CD4-positive, alpha-beta T cell (primary cell): ENCODE measurements at regions of chr3 and their contacts with region 1.

Region 1: DNA sequence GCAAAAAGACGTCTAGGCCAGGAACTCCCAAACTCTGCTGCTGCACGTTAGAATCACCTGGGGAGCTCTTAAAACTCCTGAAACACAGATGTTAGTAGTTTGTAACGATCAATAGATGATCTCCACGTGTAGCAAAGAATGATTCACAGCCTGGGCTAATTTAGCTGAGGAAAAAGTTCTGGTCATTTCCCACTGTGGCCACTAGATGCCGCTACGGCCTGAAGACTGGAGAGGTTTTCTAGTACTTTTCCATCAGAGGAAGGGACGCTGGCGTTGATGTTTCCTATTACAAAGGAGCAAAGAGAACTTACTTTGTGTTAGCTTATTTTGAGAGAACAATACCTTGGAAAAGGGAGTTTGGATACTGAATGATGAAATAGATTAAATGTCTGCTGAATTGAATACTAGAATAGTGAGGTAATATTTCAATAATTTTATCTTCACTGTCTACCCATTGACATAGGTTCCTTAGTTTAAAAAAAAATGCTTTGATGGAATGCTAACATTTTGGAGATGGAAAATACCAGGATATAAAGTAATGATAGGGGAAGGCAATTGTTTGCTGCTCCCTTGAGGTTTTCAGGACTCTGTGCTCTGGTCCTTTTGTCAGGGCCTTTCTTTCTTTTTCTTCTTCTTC is 159.1 kb downstream of the P3H2 start:
- DNase-seq: peak; percentile 32 to 73 (median 53)
- ATAC-seq: peak; percentile 80
- H3K4me3 ChIP-seq: no peak overlapping the region
- H3K4me3 Mint-ChIP-seq: no peak overlapping the region
- H3K27ac ChIP-seq: no peak overlapping the region
- H3K27ac Mint-ChIP-seq: no peak overlapping the region
- H3K4me1 ChIP-seq: peaks cover 4% of the 10 kb centered on the region
- H3K4me1 Mint-ChIP-seq: peaks cover 7% of the 10 kb centered on the region
- H3K27me3 ChIP-seq: peaks cover 0 to 3% of the 10 kb centered on the region in 2 experiments
- H3K27me3 Mint-ChIP-seq: peaks cover 22% of the 10 kb centered on the region
- CTCF ChIP-seq: peak; percentile 95

Region 2: GRCh38 chr3:190197346-190197763 is 235.7 kb after region 1 on chr3:
- CTCF ChIA-PET with region 1: no interaction called
- POLR2A ChIA-PET with region 1: no interaction called
- intact Hi-C with region 1: loop called (anchors 5 to 10 kb)
- DNase-seq: no peak
- ATAC-seq: no peak
- H3K4me3 ChIP-seq: no peak overlapping the region
- H3K4me3 Mint-ChIP-seq: no peak overlapping the region
- H3K27ac ChIP-seq: no peak overlapping the region
- H3K27ac Mint-ChIP-seq: no peak overlapping the region
- H3K4me1 ChIP-seq: no peaks in the 10 kb centered on the region
- H3K4me1 Mint-ChIP-seq: no peaks in the 10 kb centered on the region
- H3K27me3 ChIP-seq: no peaks in the 10 kb centered on the region
- H3K27me3 Mint-ChIP-seq: peaks cover 28% of the 10 kb centered on the region
- CTCF ChIP-seq: no peak

Region 3: DNA sequence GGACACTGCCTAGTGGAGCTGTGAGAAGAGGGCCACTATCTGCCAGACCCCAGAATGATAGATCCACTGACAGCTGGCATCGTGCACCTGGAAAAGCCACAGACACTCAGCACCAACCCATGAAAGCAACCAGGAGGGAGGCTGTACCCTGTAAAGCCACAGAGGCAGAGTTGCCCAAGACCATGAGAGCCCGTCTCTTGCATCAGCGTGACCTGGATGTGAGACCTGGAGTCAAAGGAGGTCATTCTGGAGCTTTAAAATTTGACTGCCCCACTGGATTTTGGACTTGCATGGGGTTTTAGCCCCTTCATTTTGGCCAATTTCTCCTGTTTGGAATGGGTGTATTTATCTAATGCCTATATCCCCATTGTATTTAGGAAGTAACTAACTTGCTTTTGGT is 242.6 kb after region 1 on chr3:
- CTCF ChIA-PET with region 1: no interaction called
- POLR2A ChIA-PET with region 1: no interaction called
- intact Hi-C with region 1: loop called (anchors 5 to 10 kb)
- DNase-seq: no peak
- ATAC-seq: no peak
- H3K4me3 ChIP-seq: no peak overlapping the region
- H3K4me3 Mint-ChIP-seq: no peak overlapping the region
- H3K27ac ChIP-seq: no peak overlapping the region
- H3K27ac Mint-ChIP-seq: no peak overlapping the region
- H3K4me1 ChIP-seq: no peaks in the 10 kb centered on the region
- H3K4me1 Mint-ChIP-seq: no peaks in the 10 kb centered on the region
- H3K27me3 ChIP-seq: peaks cover 0 to 2% of the 10 kb centered on the region in 2 experiments
- H3K27me3 Mint-ChIP-seq: peaks cover 32% of the 10 kb centered on the region
- CTCF ChIP-seq: no peak

Region 4: GRCh38 chr3:190424478-190425439 is 463.1 kb after region 1 on chr3:
- CTCF ChIA-PET with region 1: interaction called, 4 read pairs
- POLR2A ChIA-PET with region 1: no interaction called
- intact Hi-C with region 1: loop called in 1 of 2 experiments (anchors 10 kb)
- DNase-seq: peak in 6 of 14 experiments; percentile 2 to 66 (median 36)
- ATAC-seq: peak; percentile 55
- H3K4me3 ChIP-seq: no peak overlapping the region
- H3K4me3 Mint-ChIP-seq: peak overlapping the region; percentile 57
- H3K27ac ChIP-seq: no peak overlapping the region
- H3K27ac Mint-ChIP-seq: peak overlapping the region; percentile 73
- H3K4me1 ChIP-seq: peaks cover 3% of the 10 kb centered on the region
- H3K4me1 Mint-ChIP-seq: peaks cover 6% of the 10 kb centered on the region
- H3K27me3 ChIP-seq: no peaks in the 10 kb centered on the region
- H3K27me3 Mint-ChIP-seq: peaks cover 5% of the 10 kb centered on the region
- CTCF ChIP-seq: peak; percentile 67